ENCODE measurements at regions of chr5 and their contacts with region 1.

Region 1: GRCh38 chr5:170747851-170748250 is 35.7 kb upstream of the GABRP start:
- DNase-seq: no peak
- H3K4me3 Mint-ChIP-seq: no peak overlapping the region
- H3K27ac Mint-ChIP-seq: no peak overlapping the region
- H3K4me1 Mint-ChIP-seq: peaks cover 2% of the 10 kb centered on the region
- H3K27me3 Mint-ChIP-seq: peaks cover 13% of the 10 kb centered on the region

Region 2: DNA sequence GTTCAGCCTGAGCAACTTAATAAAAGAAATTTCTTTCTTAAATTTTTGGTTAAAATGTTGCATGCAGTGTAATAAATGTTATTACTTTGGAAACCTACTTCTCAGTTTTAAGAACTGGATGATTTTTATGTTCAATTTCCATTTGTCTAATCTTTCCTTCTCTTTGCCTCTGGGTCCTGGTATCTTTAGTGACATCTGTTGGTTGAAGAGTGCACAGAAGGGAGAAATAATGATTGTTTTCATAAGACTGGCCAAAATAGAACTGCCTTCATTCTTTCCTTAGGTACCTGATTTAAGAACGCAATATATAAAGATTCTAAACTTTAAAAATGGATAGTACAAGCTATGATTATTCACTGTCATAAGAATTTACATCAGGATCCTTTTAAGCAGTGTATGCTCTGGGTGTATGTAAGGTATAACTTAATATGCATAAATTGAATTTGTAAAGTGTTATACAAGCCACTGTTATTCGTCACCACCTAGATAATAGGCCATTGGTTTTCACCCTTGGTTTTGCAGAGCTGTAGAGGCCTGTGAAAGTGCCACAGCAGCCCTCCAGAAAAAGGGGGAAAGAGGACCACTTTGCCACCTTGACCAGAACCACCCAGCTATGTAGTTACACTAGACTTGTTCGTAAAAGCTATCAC is 478.4 kb after region 1 on chr5:
- intact Hi-C with region 1: loop called (anchors 10 kb)
- DNase-seq: no peak
- H3K4me3 Mint-ChIP-seq: no peak overlapping the region
- H3K27ac Mint-ChIP-seq: no peak overlapping the region
- H3K4me1 Mint-ChIP-seq: peaks cover 2% of the 10 kb centered on the region
- H3K27me3 Mint-ChIP-seq: peaks cover 8% of the 10 kb centered on the region